Mammary epithelial cell (primary cell): ENCODE measurements at regions of chr14 and their contacts with region 1.

Region 1: DNA sequence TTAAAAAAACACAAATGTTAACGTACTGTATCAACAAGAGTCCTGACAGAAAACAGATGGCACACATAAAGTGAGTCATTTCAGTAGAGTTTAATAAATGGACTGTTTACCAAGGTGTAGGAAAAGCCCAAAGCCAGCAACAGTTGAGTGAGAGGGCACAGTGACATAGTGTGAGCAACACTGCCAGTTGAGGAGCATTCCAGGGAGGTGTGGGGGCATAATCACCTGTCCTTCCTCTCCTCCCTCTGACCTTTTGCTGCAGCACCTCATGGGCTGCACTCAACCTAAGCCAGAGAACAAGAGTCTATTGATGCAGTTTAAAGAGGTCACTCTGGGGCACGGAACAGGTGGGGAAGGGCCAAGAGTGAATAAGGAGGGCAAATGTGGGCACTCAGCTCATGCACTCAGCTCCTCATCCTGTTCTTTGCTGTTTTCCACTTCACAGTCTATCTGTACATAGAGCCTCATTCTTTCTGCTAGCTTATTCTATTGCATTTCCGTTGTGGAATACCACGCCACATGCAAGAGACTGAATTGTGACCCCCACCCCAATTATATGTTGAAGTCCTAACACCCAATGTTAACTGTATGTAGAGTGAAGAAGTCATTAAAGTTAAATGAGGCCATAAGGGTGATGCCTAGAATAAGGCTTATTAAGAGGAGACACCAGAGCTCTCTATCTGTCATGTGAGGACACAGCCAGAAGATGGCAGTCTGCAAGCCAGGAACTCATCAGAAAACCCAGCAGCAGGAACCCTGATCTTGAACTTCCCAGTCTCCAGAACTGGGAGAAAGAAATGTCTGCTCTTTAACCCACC is 29.4 kb downstream of the DHRS2 start:
- DNase-seq: peak; percentile 27
- H3K4me3 ChIP-seq: no peak overlapping the region
- H3K27ac ChIP-seq: no peak overlapping the region
- H3K4me1 ChIP-seq: peaks cover 17% of the 10 kb centered on the region
- H3K27me3 ChIP-seq: no peaks in the 10 kb centered on the region
- CTCF ChIP-seq: peak; percentile 65 to 76

Region 2: GRCh38 chr14:23631702-23632460 is 33.7 kb before region 1 on chr14:
- CTCF ChIA-PET with region 1: interaction called, 4 read pairs
- dilution Hi-C with region 1: no loop called
- in situ Hi-C with region 1: no loop called
- intact Hi-C with region 1: loop called (anchors 1 kb)
- DNase-seq: peak; percentile 89
- H3K4me3 ChIP-seq: no peak overlapping the region
- H3K27ac ChIP-seq: no peak overlapping the region
- H3K4me1 ChIP-seq: peaks cover 8% of the 10 kb centered on the region
- H3K27me3 ChIP-seq: no peaks in the 10 kb centered on the region
- CTCF ChIP-seq: peak; percentile 96

Region 3: DNA sequence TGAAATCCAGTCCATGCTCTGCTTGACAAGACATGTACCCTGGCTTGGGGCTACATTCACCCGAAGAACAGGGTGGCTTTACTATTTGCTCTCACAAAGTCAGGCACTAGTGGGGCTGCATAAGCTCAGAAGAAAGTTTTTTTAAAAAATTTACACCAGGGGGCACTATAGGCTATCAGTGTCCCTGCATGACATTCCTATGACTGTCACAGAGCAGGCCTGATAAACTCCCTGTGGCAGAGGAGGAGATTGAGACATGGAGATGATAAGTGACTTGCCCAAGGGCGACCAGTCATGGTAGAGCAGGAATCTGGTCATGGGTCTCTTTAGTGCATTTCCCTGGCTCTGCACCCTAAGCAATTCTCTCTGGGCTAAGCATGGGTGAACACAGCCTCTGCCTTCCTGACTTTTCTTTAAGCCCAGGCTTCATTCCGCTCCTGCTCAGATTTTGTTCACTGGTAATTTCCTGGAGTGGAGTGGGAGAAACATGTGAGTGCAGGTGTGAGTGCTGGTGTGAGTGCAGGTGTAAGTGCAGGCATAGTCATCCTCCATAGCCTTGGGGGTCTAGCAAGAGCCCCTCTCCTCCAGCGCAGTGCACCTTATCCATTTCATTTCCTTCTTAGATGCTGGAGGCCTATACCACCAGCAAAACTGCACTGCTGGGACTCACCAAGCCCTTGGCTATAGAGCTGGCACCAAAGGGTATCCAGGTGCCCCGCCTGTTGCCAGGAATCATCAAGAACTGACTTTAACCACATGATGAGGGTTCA is 62.2 kb after region 1 on chr14:
- CTCF ChIA-PET with region 1: no interaction called
- dilution Hi-C with region 1: no loop called
- in situ Hi-C with region 1: no loop called
- intact Hi-C with region 1: loop called (anchors 1 kb)
- DNase-seq: peak; percentile 43
- H3K4me3 ChIP-seq: no peak overlapping the region
- H3K27ac ChIP-seq: no peak overlapping the region
- H3K4me1 ChIP-seq: peaks cover 8% of the 10 kb centered on the region
- H3K27me3 ChIP-seq: peaks cover 2% of the 10 kb centered on the region
- CTCF ChIP-seq: peak; percentile 37 to 40

Region 4: GRCh38 chr14:23929822-23930294 is 264.3 kb after region 1 on chr14:
- CTCF ChIA-PET with region 1: no interaction called
- dilution Hi-C with region 1: no loop called
- in situ Hi-C with region 1: no loop called
- intact Hi-C with region 1: loop called (anchors 1 kb)
- DNase-seq: peak; percentile 39
- H3K4me3 ChIP-seq: no peak overlapping the region
- H3K27ac ChIP-seq: no peak overlapping the region
- H3K4me1 ChIP-seq: peaks cover 3% of the 10 kb centered on the region
- H3K27me3 ChIP-seq: no peaks in the 10 kb centered on the region
- CTCF ChIP-seq: peak; percentile 92 to 93